ENCODE measurements at regions of chr5 and their contacts with region 1.

Region 1: GRCh38 chr5:108748401-108749127 is 867 bp downstream of the FER start:
- DNase-seq: peak; percentile 99
- H3K4me3 ChIP-seq: peak overlapping the region; percentile 81 to 98 (median 94)
- H3K27ac ChIP-seq: peak overlapping the region; percentile 98
- H3K4me1 ChIP-seq: peaks cover 14% of the 10 kb centered on the region
- H3K27me3 ChIP-seq: no peaks in the 10 kb centered on the region
- CTCF ChIP-seq: no peak
- POLR2A ChIP-seq: peak; percentile 98

Region 2: GRCh38 chr5:108642167-108642906 is 106.2 kb before region 1 on chr5:
- CTCF ChIA-PET with region 1: interaction called, 9 read pairs
- POLR2A ChIA-PET with region 1: no interaction called
- dilution Hi-C with region 1: no loop called
- intact Hi-C with region 1: loop called (anchors 2 kb)
- DNase-seq: peak; percentile 82
- H3K4me3 ChIP-seq: no peak overlapping the region
- H3K27ac ChIP-seq: no peak overlapping the region
- H3K4me1 ChIP-seq: peaks cover 5% of the 10 kb centered on the region
- H3K27me3 ChIP-seq: no peaks in the 10 kb centered on the region
- CTCF ChIP-seq: peak; percentile 84 to 93
- POLR2A ChIP-seq: no peak

Region 3: DNA sequence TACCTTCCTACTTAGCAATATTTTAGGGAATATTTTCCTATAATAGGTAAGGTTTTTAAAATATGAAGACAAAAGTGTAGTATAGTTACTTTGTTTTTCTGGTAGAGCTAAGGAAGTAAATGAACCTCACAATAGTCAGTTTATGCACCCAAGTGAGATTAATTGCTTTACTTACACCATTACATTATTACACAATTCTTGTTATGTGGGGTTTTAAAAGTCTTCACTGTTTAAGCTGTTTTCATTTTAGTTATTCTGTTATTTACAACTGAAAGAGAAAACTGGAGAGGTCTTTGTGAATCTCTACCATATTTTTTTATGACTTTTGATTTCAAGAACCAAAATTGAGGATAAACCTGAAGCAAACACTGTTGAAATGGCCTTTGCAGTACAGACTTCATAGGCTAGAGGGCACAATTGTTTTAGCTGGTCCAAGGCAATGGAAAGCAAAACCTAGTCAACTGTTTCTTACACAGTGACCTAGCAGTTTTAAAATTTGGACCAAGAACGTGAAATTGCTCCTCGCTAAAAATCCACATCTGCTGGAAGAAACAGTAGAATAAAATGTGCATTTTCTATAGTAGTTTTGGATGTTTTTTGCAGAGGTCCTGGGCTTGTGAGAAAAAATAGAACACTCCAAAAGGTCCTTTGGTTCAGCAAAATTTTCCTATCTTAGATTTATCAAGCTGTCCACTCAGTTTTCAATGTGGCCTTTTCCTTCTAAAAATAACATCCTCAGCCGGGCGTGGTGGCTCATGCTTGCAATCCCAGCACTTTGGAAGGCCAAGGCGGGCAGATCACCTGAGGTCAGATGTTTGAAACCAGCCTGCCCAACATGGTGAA is 67.3 kb before region 1 on chr5:
- CTCF ChIA-PET with region 1: interaction called, 18 read pairs
- POLR2A ChIA-PET with region 1: no interaction called
- dilution Hi-C with region 1: no loop called
- intact Hi-C with region 1: loop called (anchors 1 kb)
- DNase-seq: peak; percentile 81
- H3K4me3 ChIP-seq: no peak overlapping the region
- H3K27ac ChIP-seq: no peak overlapping the region
- H3K4me1 ChIP-seq: no peaks in the 10 kb centered on the region
- H3K27me3 ChIP-seq: no peaks in the 10 kb centered on the region
- CTCF ChIP-seq: peak; percentile 59 to 69
- POLR2A ChIP-seq: no peak

Region 4: DNA sequence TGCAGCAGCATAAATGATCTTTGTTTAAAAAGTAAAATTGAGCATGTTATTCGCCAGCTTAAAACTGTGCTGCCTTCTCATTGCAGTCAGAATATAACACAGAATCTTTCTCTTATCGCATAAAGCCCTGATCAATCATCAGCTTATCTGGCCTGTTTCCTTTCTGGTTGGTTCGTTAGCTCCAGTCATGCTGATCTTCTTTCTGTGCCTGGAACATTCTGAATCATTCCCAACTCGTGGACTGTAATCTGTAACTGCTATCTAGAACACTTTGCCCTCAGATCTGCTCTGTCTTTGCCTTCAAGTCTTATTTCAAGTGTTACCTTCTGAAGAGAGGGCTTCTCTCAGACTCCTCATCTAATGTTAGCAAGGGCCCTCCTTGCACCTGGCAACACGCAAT is 12.8 kb before region 1 on chr5:
- CTCF ChIA-PET with region 1: no interaction called
- POLR2A ChIA-PET with region 1: interaction called, 9 read pairs
- dilution Hi-C with region 1: no loop called
- intact Hi-C with region 1: loop called (anchors 1 kb)
- DNase-seq: peak; percentile 51
- H3K4me3 ChIP-seq: no peak overlapping the region
- H3K27ac ChIP-seq: no peak overlapping the region
- H3K4me1 ChIP-seq: peaks cover 10% of the 10 kb centered on the region
- H3K27me3 ChIP-seq: no peaks in the 10 kb centered on the region
- CTCF ChIP-seq: no peak
- POLR2A ChIP-seq: no peak

Region 5: DNA sequence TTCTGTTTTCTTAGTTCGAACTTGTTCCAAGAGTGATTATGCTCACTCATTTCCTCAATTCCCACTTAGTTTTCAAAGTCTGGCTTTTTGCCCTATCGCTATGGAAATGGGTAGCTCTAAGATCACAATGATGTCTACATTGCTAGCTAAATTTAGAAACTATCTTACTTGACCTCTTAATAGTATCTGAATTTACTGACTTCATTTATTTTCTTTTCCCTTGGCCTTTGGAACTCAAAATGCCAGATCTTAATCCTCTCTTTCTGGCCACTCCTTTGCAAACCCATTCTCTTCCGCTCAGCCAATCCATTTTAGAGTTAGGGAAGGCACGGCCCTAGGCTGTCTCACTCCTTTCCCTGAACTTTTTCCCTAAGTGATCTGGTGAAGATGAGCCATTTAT is 136.2 kb after region 1 on chr5:
- CTCF ChIA-PET with region 1: no interaction called
- POLR2A ChIA-PET with region 1: no interaction called
- dilution Hi-C with region 1: no loop called
- intact Hi-C with region 1: loop called (anchors 10 kb)
- DNase-seq: peak; percentile 96
- H3K4me3 ChIP-seq: no peak overlapping the region
- H3K27ac ChIP-seq: peak overlapping the region; percentile 75
- H3K4me1 ChIP-seq: peaks cover 13% of the 10 kb centered on the region
- H3K27me3 ChIP-seq: no peaks in the 10 kb centered on the region
- CTCF ChIP-seq: no peak
- POLR2A ChIP-seq: no peak

Region 6: DNA sequence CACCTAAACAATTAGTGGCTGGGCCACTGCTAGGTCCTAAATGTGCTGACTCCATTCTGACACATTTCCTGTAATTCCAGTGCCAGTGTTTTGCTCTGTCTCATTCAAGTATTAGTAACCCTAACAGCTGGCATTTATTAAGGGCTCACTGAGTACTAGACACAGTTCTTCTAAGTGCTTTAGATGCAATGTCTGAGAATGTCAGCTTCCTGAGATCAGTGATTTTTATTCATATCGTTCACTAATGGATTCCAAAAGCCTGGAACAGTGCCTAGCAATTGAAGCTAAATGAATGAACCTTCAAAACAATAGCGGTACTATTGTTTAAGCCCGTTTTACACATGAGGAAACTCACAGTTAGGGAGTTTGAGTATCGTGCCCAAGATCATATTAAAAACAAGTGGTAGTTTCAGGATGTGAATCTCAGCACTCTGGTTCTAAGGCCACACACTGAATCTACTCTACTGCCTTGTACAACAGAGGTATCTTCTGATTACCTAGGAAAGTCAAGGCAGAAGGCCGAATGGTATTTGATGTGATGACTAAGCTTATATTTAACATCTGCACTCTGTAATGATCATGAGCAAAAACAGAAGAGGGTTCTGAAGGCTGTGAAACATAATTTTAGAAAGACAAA is 357.2 kb after region 1 on chr5:
- CTCF ChIA-PET with region 1: no interaction called
- POLR2A ChIA-PET with region 1: interaction called, 3 read pairs
- dilution Hi-C with region 1: no loop called
- intact Hi-C with region 1: loop called (anchors 1 kb)
- DNase-seq: peak; percentile 97
- H3K4me3 ChIP-seq: peak overlapping the region in 1 of 3 experiments; percentile 16
- H3K27ac ChIP-seq: peak overlapping the region; percentile 89
- H3K4me1 ChIP-seq: peaks cover 21% of the 10 kb centered on the region
- H3K27me3 ChIP-seq: no peaks in the 10 kb centered on the region
- CTCF ChIP-seq: no peak
- POLR2A ChIP-seq: no peak

Region 7: GRCh38 chr5:109468737-109469420 is 720.3 kb after region 1 on chr5:
- CTCF ChIA-PET with region 1: no interaction called
- POLR2A ChIA-PET with region 1: no interaction called
- dilution Hi-C with region 1: no loop called
- intact Hi-C with region 1: loop called (anchors 1 kb)
- DNase-seq: peak; percentile 94
- H3K4me3 ChIP-seq: no peak overlapping the region
- H3K27ac ChIP-seq: no peak overlapping the region
- H3K4me1 ChIP-seq: peaks cover 2% of the 10 kb centered on the region
- H3K27me3 ChIP-seq: no peaks in the 10 kb centered on the region
- CTCF ChIP-seq: peak; percentile 69 to 73
- POLR2A ChIP-seq: no peak

Measured in endothelial cell of umbilical vein (primary cell).